RWPE1 (cell line): ENCODE measurements at regions of chr5 and their contacts with region 1.

Region 1: DNA sequence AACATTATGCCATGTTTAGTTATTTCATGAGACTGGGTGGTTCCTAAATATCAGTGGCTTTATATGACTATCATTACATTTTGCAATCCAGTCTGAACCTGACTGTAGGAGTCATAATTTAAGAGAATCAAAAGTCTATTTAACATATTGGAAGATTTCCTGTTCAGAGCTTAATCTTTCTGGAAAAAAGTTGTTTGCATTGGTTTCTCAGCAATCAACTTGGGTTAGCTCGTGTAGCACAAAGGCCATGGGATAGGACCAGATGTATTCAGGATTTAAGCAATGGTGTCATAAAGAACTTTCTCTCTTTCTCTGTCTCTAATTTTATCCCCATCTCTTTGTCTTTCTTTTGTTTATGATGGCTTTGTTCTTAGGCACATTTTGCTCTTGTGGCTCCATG is 296.0 kb upstream of the KCNN2 start:
- DNase-seq: no peak
- H3K27ac ChIP-seq: no peak overlapping the region
- CTCF ChIP-seq: no peak

Region 2: GRCh38 chr5:113421693-113422092 is 644.2 kb before region 1 on chr5:
- CTCF ChIA-PET with region 1: no interaction called
- POLR2A ChIA-PET with region 1: interaction called, 10 read pairs
- DNase-seq: no peak
- H3K27ac ChIP-seq: no peak overlapping the region
- CTCF ChIP-seq: no peak

Region 3: DNA sequence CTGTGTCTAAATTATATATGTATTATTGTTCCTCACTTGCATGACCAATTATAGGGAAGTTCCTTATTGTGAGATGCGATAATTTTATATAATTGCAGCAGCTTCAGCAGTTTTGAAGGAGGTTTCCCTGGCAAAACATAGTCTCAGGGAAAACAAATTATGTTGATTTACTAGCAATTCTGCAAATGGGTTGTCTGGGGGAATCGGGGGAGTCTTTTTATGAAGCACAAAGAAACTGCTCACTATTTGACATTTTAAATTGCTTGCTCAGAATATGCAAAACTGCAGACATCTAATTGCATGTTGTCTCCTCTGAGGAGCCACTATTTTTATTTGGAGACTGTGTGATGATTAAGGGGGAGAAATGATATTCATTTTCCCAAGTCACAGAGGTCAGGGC is 190.8 kb before region 1 on chr5:
- CTCF ChIA-PET with region 1: no interaction called
- POLR2A ChIA-PET with region 1: no interaction called
- DNase-seq: no peak
- H3K27ac ChIP-seq: no peak overlapping the region
- CTCF ChIP-seq: no peak

Region 4: GRCh38 chr5:114089259-114089658 is 23.3 kb after region 1 on chr5:
- CTCF ChIA-PET with region 1: no interaction called
- POLR2A ChIA-PET with region 1: no interaction called
- DNase-seq: no peak
- H3K27ac ChIP-seq: no peak overlapping the region
- CTCF ChIP-seq: no peak

Region 5: DNA sequence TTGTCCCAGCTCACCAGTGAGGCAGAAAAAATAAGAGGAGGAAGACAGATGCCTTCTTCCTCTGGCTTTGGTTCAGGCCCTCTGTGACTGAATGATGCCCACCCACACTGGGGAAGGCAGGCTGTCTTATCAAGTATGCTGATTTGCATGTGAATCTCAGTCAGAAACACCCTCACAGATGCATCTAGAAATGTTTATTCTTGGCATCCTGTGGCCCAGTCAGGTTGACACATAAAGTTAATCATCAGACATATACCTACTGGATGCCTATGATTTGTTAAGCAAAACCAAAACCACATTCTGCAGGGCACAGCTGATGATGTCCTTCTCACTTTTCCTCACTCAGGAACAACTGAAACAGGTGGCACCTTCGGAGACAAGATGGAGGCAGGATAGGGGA is 52.6 kb after region 1 on chr5:
- CTCF ChIA-PET with region 1: no interaction called
- POLR2A ChIA-PET with region 1: no interaction called
- DNase-seq: no peak
- H3K27ac ChIP-seq: no peak overlapping the region
- CTCF ChIP-seq: no peak

Region 6: DNA sequence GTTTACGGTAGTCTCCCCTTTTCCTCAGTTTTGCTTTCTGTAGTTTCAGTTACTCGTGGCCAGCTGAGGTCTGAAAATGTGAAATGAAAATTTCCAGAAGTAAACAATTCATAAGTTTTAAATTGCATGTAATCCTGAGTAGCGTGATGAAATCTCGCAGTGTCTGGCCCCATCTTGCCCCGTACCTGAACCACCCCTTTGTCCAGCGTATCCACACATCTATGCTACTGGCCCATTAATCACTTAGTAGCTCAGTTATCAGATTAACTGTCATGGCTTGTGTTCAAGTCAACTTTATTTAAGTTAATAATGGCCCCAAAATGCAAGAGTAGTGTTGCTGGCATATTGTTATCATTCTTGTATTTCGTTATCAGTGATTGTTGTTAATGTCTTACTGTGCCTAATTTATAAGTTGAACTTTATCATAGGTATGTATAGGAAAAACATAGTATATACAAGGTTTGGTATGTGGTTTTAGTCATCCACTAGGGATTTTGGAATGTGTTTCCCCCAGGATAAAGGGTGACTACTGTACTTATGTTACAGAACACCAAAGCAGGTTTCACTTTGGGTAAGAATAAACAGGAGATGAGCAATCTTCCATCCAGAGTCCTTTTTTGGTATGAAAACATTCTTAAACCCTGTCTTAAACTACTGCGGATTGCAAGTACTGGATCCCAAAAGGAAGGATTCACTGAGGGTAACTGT is 177.5 kb after region 1 on chr5:
- CTCF ChIA-PET with region 1: no interaction called
- POLR2A ChIA-PET with region 1: no interaction called
- DNase-seq: no peak
- H3K27ac ChIP-seq: no peak overlapping the region
- CTCF ChIP-seq: no peak